Keratinocyte (primary cell): ENCODE measurements at regions of chr2 and their contacts with region 1.

Region 1: DNA sequence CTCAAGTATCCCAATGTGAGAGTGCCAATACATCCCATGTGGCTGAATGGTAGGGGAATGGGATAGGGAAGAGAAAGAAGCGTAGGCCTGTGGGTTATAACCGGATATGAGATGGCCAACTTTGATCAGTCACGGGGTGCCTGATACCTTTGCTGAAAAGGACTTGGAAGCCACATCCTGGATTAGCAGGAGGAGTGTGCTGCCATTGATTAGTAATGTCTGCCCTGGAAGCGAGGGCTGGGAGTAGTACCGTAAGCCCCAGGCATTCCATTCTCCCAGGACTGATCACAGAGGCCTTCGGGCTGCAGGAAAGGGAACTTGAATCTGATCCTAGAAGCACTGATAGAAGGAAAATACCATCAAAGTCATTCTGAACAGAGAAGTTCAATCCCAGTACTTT is 218.5 kb downstream of the TFCP2L1 start:
- DNase-seq: no peak
- H3K4me3 ChIP-seq: no peak overlapping the region
- H3K27ac ChIP-seq: no peak overlapping the region
- H3K4me1 ChIP-seq: no peaks in the 10 kb centered on the region
- H3K27me3 ChIP-seq: peaks cover 39% of the 10 kb centered on the region
- CTCF ChIP-seq: no peak

Region 2: DNA sequence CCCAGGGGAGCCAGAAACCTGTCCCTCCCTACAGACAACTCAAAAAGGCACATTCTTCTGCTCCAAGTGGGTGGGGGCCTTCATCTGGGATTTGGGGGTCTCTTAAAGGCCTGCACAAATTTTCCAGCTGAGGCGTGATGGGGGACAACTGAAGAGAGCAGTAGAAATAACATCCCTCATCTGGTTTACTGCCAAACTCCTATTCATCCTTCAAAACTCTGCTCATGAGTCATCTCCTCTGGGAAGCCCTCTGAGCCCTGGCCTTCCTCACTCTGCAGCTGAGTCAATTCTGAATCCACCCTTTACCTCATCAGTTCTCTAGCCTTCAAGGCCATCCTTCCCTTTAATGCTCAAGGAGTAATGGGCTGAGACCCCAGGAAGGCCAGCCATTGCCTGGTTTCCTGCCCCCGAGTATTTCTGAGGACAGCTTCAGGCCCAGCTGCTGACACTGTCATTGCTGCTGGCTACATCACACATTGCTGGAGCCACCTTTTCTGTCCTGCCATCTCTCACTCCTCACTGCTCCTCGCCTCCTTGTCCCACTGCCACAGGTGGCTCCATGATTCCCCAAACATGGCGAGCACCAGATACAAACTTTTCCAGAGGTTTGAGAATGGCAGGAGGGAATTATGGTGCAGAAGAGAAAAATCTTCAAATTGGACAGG is 363.1 kb before region 1 on chr2:
- dilution Hi-C with region 1: loop called (anchors 10 kb)
- DNase-seq: no peak
- H3K4me3 ChIP-seq: no peak overlapping the region
- H3K27ac ChIP-seq: no peak overlapping the region
- H3K4me1 ChIP-seq: peaks cover 5% of the 10 kb centered on the region
- H3K27me3 ChIP-seq: peaks cover 5% of the 10 kb centered on the region
- CTCF ChIP-seq: no peak

Region 3: DNA sequence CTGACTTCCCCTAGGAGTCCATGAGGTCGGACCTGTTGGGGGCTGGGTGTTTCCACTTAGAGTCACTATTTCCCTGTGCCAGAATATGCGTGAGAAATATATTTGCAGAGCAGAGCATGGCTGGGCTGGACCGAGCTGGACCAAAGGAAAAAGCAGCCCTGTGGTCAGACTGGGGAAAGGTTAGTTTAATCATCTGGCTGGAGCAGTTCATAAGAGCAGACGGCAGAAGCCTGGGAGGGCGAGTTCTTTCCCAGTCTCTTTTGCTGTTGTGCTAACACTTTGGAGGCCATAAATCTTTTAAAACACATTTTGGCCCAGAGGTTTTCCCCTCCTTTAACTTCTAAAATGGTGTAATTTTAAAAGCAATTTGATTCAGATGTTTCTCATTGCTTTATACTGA is 264.4 kb before region 1 on chr2:
- dilution Hi-C with region 1: loop called (anchors 10 kb)
- DNase-seq: no peak
- H3K4me3 ChIP-seq: no peak overlapping the region
- H3K27ac ChIP-seq: no peak overlapping the region
- H3K4me1 ChIP-seq: no peaks in the 10 kb centered on the region
- H3K27me3 ChIP-seq: no peaks in the 10 kb centered on the region
- CTCF ChIP-seq: no peak